WTC11 (cell line): ENCODE measurements at regions of chr21 and their contacts with region 1.

Region 1: DNA sequence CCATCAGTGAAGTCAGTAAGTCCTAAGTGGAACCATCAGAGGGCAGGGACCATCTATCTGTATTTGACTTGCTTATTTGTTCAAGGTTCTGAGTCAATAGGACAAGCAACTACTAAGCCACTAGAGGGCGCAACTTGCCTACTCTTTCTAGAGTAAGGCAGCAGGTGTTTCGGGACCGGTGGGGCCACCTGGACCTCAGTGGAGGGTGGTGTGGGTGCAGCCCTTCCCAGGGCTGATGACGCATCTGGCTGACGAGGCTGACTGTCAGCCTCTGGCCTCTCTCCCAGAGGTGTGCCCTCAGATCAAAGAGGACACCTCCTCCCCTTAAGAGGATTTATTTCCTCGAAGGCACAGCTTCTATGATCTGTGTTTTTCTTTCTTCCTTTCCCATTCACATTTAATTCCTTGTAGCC is 6.6 kb downstream of the CBR3 start:
- DNase-seq: peak; percentile 86
- ATAC-seq: peak; percentile 96
- H3K4me3 Mint-ChIP-seq: no peak overlapping the region
- H3K27ac Mint-ChIP-seq: 0 out of 2 replicates have a peak overlapping the region, but pooled peaks have one; percentile 5
- H3K4me1 Mint-ChIP-seq: peaks cover 21% of the 10 kb centered on the region
- H3K27me3 Mint-ChIP-seq: peaks cover 2% of the 10 kb centered on the region
- CTCF ChIP-seq: peak; percentile 88

Region 2: DNA sequence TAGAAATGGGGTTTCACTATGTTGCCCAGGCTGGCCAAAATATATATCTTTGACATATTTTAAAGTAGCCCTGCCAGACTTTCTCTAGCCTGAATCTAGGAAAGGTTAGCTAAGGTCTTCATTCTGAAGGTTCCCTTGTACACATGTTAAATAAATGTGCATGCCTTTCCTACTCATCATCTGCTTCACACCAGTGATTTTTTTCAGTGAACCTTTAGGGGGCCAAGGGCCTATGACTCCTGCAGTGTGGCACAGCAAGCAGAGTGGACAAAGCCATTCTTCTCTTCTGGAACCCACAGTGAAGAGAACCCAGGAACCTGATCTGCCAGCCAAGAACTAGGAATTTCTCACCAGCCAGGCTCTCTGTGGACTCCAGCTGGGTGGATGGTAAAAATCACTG is 48.8 kb before region 1 on chr21:
- CTCF ChIA-PET with region 1: no interaction called
- POLR2A ChIA-PET with region 1: no interaction called
- DNase-seq: no peak
- ATAC-seq: no peak
- H3K4me3 Mint-ChIP-seq: no peak overlapping the region
- H3K27ac Mint-ChIP-seq: no peak overlapping the region
- H3K4me1 Mint-ChIP-seq: peaks cover 40% of the 10 kb centered on the region
- H3K27me3 Mint-ChIP-seq: peaks cover 8% of the 10 kb centered on the region
- CTCF ChIP-seq: no peak

Region 3: DNA sequence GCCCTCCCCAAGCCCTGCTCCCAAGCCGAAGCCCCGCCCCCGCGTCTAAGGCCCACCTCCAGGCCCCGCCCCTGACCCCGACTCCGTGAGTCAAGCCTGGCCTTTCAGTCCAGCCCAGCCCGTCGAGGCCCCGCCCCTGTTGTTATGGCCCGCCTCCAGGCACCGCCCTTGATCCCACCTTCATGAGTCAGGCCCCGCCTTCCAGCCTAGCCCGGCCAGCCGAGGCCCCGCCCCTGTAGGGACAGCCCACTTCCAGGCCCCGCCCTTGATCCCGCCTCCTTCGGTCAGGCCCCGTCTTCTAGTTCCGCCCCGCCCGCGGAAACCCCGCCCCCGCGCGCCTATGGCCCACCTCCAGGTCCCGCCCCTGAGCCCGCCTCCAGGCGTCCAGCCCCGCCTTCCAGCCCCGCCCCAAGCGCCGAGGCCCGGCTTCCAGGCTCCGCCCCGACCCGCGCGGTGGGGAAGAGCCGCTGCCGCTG is 14.9 kb after region 1 on chr21:
- CTCF ChIA-PET with region 1: interaction called, 14 read pairs
- POLR2A ChIA-PET with region 1: no interaction called
- DNase-seq: peak; percentile 100
- ATAC-seq: peak; percentile 94
- H3K4me3 Mint-ChIP-seq: peak overlapping the region; percentile 73
- H3K27ac Mint-ChIP-seq: no peak overlapping the region
- H3K4me1 Mint-ChIP-seq: peaks cover 11% of the 10 kb centered on the region
- H3K27me3 Mint-ChIP-seq: peaks cover 38% of the 10 kb centered on the region
- CTCF ChIP-seq: no peak